Transverse colon (tissue), 4 donors: ENCODE measurements at regions of chr20 and their contacts with region 1.

Region 1: GRCh38 chr20:5662769-5663168 is 87.4 kb upstream of the SHLD1 start:
- DNase-seq: no peak
- H3K4me3 ChIP-seq: no peak overlapping the region
- H3K27ac ChIP-seq: no peak overlapping the region
- H3K4me1 ChIP-seq: peaks cover 10 to 27% (median 13%) of the 10 kb centered on the region in 4 donors
- H3K27me3 ChIP-seq: no peaks in the 10 kb centered on the region
- CTCF ChIP-seq: no peak
- EP300 ChIP-seq: no peak
- POLR2A ChIP-seq: no peak

Region 2: DNA sequence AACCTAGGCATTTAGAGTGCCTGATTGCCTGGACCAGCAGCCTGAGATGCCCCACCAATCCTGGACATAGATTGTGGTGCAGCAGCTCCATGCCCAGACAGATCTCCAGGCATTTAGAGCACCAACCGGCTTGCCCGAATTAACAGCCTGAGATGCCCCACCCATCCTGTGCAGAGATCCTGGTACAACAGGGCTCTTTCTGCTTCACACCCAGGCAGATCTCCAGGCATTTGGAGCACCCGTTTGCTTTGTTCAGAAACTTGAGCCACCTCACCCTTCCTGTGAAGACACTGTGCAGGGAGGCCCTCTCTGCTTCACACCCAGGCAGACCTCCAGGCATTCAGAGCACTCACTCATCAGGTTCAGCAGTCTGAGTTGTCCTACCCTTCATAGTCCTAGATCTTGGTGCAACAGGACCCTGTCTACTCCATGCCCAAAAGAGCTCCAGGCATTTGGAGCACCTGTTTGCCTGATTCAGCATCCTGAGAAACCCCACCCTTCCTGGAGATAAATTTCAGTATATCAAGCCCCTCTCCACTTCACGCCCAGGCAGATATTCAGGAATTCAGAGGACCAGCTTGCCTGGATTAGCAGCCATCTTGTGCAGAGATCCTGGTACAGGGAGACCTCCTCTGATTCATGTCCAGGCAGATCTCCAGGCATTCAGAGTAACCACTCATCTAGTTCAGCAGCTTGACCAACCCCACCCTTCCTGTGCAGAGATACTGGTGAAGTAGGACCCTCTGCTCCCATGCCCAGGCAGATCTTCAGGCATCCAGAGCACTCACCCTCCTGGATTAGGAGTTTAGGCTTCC is 649.3 kb after region 1 on chr20:
- in situ Hi-C with region 1: no loop called
- intact Hi-C with region 1: no loop called
- DNase-seq: no peak
- H3K4me3 ChIP-seq: no peak overlapping the region
- H3K27ac ChIP-seq: no peak overlapping the region
- H3K4me1 ChIP-seq: no peaks in the 10 kb centered on the region
- H3K27me3 ChIP-seq: no peaks in the 10 kb centered on the region
- CTCF ChIP-seq: no peak
- EP300 ChIP-seq: no peak
- POLR2A ChIP-seq: no peak

Region 3: GRCh38 chr20:6685181-6685582 is 1022.4 kb after region 1 on chr20:
- in situ Hi-C with region 1: no loop called
- intact Hi-C with region 1: loop called (anchors 5 kb)
- DNase-seq: no peak
- H3K4me3 ChIP-seq: no peak overlapping the region
- H3K27ac ChIP-seq: no peak overlapping the region
- H3K4me1 ChIP-seq: peaks cover 0 to 14% (median under 1%) of the 10 kb centered on the region in 4 donors
- H3K27me3 ChIP-seq: no peaks in the 10 kb centered on the region
- CTCF ChIP-seq: no peak
- EP300 ChIP-seq: no peak
- POLR2A ChIP-seq: no peak